ENCODE measurements at regions of chr1 and their contacts with region 1.

Region 1: DNA sequence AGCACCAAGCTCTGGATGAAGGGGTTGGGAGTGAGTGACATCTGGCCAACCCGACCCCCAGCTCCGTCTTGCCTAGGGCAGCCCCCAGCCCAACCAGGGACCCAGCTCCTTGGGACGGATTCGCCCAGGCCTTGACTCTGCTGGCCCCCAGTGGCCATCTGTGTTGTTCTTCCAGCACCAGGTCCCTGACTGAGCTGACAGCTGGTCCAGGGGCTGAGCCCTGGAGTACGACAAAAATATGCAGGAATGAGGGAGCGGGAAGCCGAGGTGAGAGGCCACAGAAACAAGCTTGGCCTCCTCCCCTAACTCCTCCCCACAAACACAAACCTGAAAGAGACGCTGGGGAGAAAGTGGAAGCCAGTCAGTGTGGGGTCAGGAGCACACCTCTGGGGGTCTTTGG is 55.0 kb upstream of the PAX7 start:
- DNase-seq: peak; percentile 50
- CTCF ChIP-seq: peak; percentile 93

Region 2: DNA sequence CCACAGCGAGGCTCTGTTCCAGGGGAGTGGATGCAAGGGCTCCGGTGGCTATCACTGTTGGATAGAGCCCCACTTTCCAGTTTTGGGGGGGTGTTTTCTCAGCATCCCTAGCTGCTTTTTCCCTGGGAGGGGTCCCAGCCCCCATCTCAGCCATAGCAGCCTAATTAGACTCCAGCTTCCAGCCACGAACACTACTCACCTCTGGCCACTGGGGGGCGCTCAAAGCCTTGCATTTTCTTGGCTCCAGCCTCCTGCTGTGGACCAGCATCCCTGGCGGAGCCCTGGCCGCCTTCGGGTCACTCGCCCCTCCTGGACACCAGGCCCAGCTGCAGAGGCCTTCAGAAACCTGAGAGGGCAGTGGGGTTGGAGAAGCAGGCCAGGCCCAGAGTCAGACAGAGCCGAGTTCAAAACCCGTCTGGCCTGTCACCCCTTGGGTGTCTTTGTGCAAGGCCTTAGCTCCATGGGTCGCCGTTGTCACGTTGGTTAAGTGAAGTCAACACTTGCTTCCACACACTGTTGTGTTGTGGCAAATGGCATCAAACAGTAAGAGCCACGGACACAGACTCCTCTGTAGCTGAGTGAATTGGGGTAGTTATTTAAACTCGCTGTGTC is 914.0 kb before region 1 on chr1:
- CTCF ChIA-PET with region 1: interaction called, 20 read pairs
- POLR2A ChIA-PET with region 1: no interaction called
- DNase-seq: peak; percentile 85
- CTCF ChIP-seq: peak; percentile 79

Region 3: GRCh38 chr1:18452375-18452949 is 123.2 kb before region 1 on chr1:
- CTCF ChIA-PET with region 1: no interaction called
- POLR2A ChIA-PET with region 1: no interaction called
- DNase-seq: no peak
- CTCF ChIP-seq: no peak

Region 4: DNA sequence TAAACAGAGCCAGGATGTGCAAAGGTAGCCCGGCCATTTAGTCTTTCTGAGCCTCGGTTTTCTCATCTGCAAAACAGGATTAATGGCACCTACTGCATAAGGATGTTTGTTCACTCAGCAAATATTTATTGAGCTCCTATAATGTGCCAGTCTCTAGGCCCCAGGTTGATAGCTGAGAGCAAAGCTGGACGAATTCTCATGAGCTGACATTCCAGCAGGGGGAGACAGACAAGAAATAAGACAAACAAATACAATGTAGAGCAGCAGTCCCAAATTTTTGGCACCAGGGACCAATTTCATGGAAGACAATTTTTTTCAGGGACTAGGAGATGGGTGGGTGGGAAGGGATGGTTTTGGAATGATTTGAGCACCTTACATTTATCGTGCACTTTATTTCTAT is 19.3 kb before region 1 on chr1:
- CTCF ChIA-PET with region 1: interaction called, 36 read pairs
- POLR2A ChIA-PET with region 1: no interaction called
- DNase-seq: no peak
- CTCF ChIP-seq: peak; percentile 34

Region 5: DNA sequence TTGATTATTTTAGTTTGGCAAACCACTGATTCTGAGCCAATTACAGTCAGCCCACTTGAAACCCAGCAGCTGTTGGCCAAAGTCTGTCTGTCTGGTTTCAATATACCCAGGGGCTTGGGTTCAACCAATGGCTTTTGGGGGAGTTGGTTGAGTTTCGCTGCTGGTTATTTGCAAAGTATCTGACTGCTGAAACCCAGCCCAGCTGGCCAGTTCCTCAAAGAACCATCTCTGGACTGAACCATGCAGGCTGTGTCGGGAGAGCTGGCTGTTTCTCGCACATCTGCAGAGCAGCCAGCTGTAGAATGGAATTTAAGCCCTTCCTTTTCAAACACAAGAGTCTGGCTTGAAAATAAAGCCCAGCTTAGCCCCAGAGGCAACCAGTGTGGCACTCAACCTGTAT is 10.9 kb before region 1 on chr1:
- CTCF ChIA-PET with region 1: interaction called, 44 read pairs
- POLR2A ChIA-PET with region 1: no interaction called
- DNase-seq: no peak
- CTCF ChIP-seq: no peak

Region 6: DNA sequence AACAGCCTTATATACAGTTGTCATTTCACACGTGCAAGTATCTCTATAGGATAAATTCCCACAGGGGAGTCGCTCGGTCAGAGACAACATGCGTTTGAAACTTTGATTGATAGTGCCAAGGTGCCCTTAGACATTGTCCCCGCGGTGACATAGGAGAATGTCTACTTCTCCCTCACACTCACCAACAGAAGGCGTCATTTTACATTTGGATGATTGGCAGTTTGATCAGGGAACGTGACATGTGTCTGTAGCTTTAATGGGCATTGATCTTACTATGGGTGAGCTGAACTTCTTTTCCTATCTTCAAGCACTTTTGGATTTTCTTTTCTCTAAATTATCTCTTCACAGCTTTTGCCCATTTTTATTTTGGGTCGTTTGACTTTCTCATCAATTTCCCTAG is 12.5 kb after region 1 on chr1:
- CTCF ChIA-PET with region 1: interaction called, 47 read pairs
- POLR2A ChIA-PET with region 1: no interaction called
- DNase-seq: no peak
- CTCF ChIP-seq: no peak

Measured in GM10248 (cell line).